CD8-positive, alpha-beta T cell (primary cell): ENCODE measurements at regions of chr2 and their contacts with region 1.

Region 1: DNA sequence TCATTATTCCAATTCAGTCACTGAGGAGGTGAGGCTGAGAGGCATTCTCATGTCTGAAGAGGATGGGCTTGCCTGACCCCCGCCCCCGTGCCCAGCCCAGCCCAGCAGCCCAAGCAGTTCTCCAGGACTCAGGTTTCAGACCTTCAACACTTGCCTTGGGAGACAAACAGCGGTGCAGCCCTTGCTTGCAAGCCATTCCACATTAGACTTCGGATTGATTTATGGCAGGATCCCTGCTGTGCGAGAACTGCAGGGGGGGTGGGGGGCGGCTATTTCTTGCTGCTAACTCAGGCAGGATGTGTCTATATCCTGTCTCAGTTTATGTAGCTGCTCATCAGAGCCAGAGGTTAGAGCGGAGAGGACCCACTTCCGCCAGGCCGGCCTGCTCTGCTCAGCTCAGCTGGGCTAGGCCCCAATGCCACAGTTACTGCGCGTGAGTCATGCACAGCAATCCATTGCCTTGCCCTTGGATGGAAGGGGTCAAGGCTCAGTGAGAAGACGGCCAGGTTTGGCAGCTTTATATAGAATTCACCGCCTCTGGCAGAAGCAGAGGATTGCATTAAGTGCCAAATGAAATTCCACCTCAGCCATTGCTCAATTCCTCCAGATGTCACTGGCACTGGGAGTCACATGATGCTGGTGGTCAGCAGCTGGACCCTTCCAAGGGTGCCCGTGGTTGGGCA is 1.8 kb downstream of the GYPC start:
- DNase-seq: peak; percentile 49 to 89 (median 79)
- ATAC-seq: peak; percentile 62
- H3K4me3 ChIP-seq: peak overlapping the region; percentile 80 to 96
- H3K4me3 Mint-ChIP-seq: peak overlapping the region; percentile 94
- H3K27ac ChIP-seq: peak overlapping the region; percentile 87 to 89
- H3K27ac Mint-ChIP-seq: peak overlapping the region; percentile 98
- H3K4me1 ChIP-seq: peaks cover 59% of the 10 kb centered on the region
- H3K4me1 Mint-ChIP-seq: peaks cover 75% of the 10 kb centered on the region
- H3K27me3 ChIP-seq: no peaks in the 10 kb centered on the region
- H3K27me3 Mint-ChIP-seq: no peaks in the 10 kb centered on the region
- CTCF ChIP-seq: no peak

Region 2: DNA sequence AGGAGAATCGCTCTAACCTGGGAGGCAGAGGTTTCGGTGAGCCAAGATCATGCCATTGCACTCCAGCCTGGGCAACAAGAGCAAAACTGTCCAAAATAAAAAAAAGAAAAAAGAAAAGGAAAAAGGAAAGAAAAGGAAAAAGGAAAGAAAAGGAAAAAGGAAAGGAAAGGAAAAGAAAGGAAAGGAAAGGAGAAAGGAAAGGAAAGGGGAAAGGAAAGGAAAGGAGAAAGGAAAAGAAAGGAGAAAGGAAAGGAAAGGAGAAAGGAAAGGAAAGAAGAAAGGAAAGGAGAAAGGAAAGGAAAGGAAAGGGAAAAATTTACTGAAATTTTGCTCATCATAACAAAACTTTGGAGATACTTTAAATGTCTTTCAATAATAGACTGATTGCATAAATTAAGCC is 393.2 kb before region 1 on chr2:
- CTCF ChIA-PET with region 1: no interaction called
- POLR2A ChIA-PET with region 1: no interaction called
- intact Hi-C with region 1: no loop called
- DNase-seq: no peak
- ATAC-seq: no peak
- H3K4me3 ChIP-seq: no peak overlapping the region
- H3K4me3 Mint-ChIP-seq: no peak overlapping the region
- H3K27ac ChIP-seq: no peak overlapping the region
- H3K27ac Mint-ChIP-seq: no peak overlapping the region
- H3K4me1 ChIP-seq: no peaks in the 10 kb centered on the region
- H3K4me1 Mint-ChIP-seq: no peaks in the 10 kb centered on the region
- H3K27me3 ChIP-seq: peaks cover 0 to 2% of the 10 kb centered on the region in 2 experiments
- H3K27me3 Mint-ChIP-seq: peaks cover 18% of the 10 kb centered on the region
- CTCF ChIP-seq: no peak

Region 3: GRCh38 chr2:126513033-126513432 is 144.7 kb before region 1 on chr2:
- CTCF ChIA-PET with region 1: no interaction called
- POLR2A ChIA-PET with region 1: no interaction called
- intact Hi-C with region 1: no loop called
- DNase-seq: no peak
- ATAC-seq: no peak
- H3K4me3 ChIP-seq: no peak overlapping the region
- H3K4me3 Mint-ChIP-seq: no peak overlapping the region
- H3K27ac ChIP-seq: no peak overlapping the region
- H3K27ac Mint-ChIP-seq: no peak overlapping the region
- H3K4me1 ChIP-seq: no peaks in the 10 kb centered on the region
- H3K4me1 Mint-ChIP-seq: no peaks in the 10 kb centered on the region
- H3K27me3 ChIP-seq: no peaks in the 10 kb centered on the region
- H3K27me3 Mint-ChIP-seq: no peaks in the 10 kb centered on the region
- CTCF ChIP-seq: no peak

Region 4: GRCh38 chr2:126634273-126634861 is 23.4 kb before region 1 on chr2:
- CTCF ChIA-PET with region 1: interaction called, 4 read pairs
- POLR2A ChIA-PET with region 1: no interaction called
- intact Hi-C with region 1: loop called in 1 of 2 experiments (anchors 2 kb)
- DNase-seq: peak in 7 of 9 experiments; percentile 14 to 67 (median 41)
- ATAC-seq: peak; percentile 48
- H3K4me3 ChIP-seq: no peak overlapping the region
- H3K4me3 Mint-ChIP-seq: no peak overlapping the region
- H3K27ac ChIP-seq: no peak overlapping the region
- H3K27ac Mint-ChIP-seq: no peak overlapping the region
- H3K4me1 ChIP-seq: no peaks in the 10 kb centered on the region
- H3K4me1 Mint-ChIP-seq: peaks cover 5% of the 10 kb centered on the region
- H3K27me3 ChIP-seq: no peaks in the 10 kb centered on the region
- H3K27me3 Mint-ChIP-seq: no peaks in the 10 kb centered on the region
- CTCF ChIP-seq: peak; percentile 51

Region 5: GRCh38 chr2:126714191-126714965 is 56.6 kb after region 1 on chr2:
- CTCF ChIA-PET with region 1: no interaction called
- POLR2A ChIA-PET with region 1: no interaction called
- intact Hi-C with region 1: loop called in 1 of 2 experiments (anchors 5 kb)
- DNase-seq: peak in 1 of 9 experiments; percentile 7
- ATAC-seq: no peak
- H3K4me3 ChIP-seq: no peak overlapping the region
- H3K4me3 Mint-ChIP-seq: no peak overlapping the region
- H3K27ac ChIP-seq: no peak overlapping the region
- H3K27ac Mint-ChIP-seq: no peak overlapping the region
- H3K4me1 ChIP-seq: no peaks in the 10 kb centered on the region
- H3K4me1 Mint-ChIP-seq: peaks cover 6% of the 10 kb centered on the region
- H3K27me3 ChIP-seq: no peaks in the 10 kb centered on the region
- H3K27me3 Mint-ChIP-seq: no peaks in the 10 kb centered on the region
- CTCF ChIP-seq: no peak

Region 6: GRCh38 chr2:126761981-126762878 is 104.5 kb after region 1 on chr2:
- CTCF ChIA-PET with region 1: interaction called, 5 read pairs
- POLR2A ChIA-PET with region 1: interaction called, 7 read pairs
- intact Hi-C with region 1: loop called (anchors 2 to 5 kb)
- DNase-seq: peak; percentile 22 to 81 (median 62)
- ATAC-seq: peak; percentile 93
- H3K4me3 ChIP-seq: peak overlapping the region; percentile 9 to 36
- H3K4me3 Mint-ChIP-seq: peak overlapping the region; percentile 76
- H3K27ac ChIP-seq: peak overlapping the region; percentile 49 to 64
- H3K27ac Mint-ChIP-seq: peak overlapping the region; percentile 97
- H3K4me1 ChIP-seq: peaks cover 53% of the 10 kb centered on the region
- H3K4me1 Mint-ChIP-seq: peaks cover 83% of the 10 kb centered on the region
- H3K27me3 ChIP-seq: no peaks in the 10 kb centered on the region
- H3K27me3 Mint-ChIP-seq: no peaks in the 10 kb centered on the region
- CTCF ChIP-seq: no peak

Region 7: GRCh38 chr2:127081826-127082633 is 424.3 kb after region 1 on chr2:
- CTCF ChIA-PET with region 1: no interaction called
- POLR2A ChIA-PET with region 1: no interaction called
- intact Hi-C with region 1: loop called (anchors 2 to 10 kb)
- DNase-seq: peak; percentile 67 to 94 (median 82)
- ATAC-seq: peak; percentile 66
- H3K4me3 ChIP-seq: peak overlapping the region; percentile 84 to 94
- H3K4me3 Mint-ChIP-seq: peak overlapping the region; percentile 90
- H3K27ac ChIP-seq: peak overlapping the region; percentile 94 to 96
- H3K27ac Mint-ChIP-seq: peak overlapping the region; percentile 99
- H3K4me1 ChIP-seq: peaks cover 94% of the 10 kb centered on the region
- H3K4me1 Mint-ChIP-seq: peaks cover 85% of the 10 kb centered on the region
- H3K27me3 ChIP-seq: no peaks in the 10 kb centered on the region
- H3K27me3 Mint-ChIP-seq: no peaks in the 10 kb centered on the region
- CTCF ChIP-seq: no peak

Region 8: DNA sequence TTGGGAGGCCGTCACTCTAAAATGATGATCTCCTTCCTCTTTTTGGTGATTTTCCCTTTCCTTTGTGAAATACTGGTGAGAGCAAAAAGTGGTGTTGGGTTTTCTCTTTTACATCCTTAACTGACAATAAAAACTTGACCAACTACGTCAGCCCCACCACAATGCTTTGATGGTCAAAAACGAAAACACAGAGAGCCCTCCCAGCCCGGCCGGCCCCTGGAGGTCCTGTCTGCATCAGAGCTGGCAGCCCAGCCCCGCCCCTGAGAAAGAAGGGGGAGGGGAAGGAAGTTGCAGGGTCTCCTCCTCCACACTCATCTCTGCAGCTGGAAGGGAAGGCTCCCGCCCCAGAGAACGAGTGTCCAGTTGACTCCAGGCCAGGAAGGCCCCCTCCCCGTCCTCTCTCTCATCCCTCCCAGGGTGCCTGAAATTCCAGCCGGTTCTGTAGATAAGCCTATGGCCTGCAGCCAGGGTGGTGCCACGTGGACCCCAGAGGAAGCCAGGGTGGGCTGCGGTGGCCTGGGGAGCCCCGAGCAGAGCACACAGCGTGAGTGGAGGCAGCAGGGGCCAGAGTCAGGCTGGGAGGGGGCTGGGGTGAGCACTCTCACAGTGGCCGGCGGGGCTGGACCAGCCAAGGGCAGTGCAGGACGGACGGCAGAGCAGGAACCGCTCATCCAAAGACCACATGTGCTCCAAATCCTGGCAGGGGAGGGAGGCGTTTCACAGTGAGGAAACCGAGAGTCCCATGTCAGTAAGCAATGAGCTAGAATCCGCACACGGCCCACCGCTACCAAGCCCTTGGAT is 429.4 kb after region 1 on chr2:
- CTCF ChIA-PET with region 1: no interaction called
- POLR2A ChIA-PET with region 1: no interaction called
- intact Hi-C with region 1: loop called in 1 of 2 experiments (anchors 10 kb)
- DNase-seq: no peak
- ATAC-seq: no peak
- H3K4me3 ChIP-seq: no peak overlapping the region
- H3K4me3 Mint-ChIP-seq: no peak overlapping the region
- H3K27ac ChIP-seq: peak overlapping the region in 1 of 2 experiments; percentile 51
- H3K27ac Mint-ChIP-seq: peak overlapping the region; percentile 84
- H3K4me1 ChIP-seq: peaks cover 53% of the 10 kb centered on the region
- H3K4me1 Mint-ChIP-seq: peaks cover 49% of the 10 kb centered on the region
- H3K27me3 ChIP-seq: no peaks in the 10 kb centered on the region
- H3K27me3 Mint-ChIP-seq: no peaks in the 10 kb centered on the region
- CTCF ChIP-seq: no peak

Region 9: GRCh38 chr2:128321784-128322714 is 1664.3 kb after region 1 on chr2:
- CTCF ChIA-PET with region 1: no interaction called
- POLR2A ChIA-PET with region 1: no interaction called
- intact Hi-C with region 1: loop called in 1 of 2 experiments (anchors 5 kb)
- DNase-seq: peak; percentile 66 to 89 (median 80)
- ATAC-seq: peak; percentile 68
- H3K4me3 ChIP-seq: peak overlapping the region; percentile 48 to 76
- H3K4me3 Mint-ChIP-seq: peak overlapping the region; percentile 74
- H3K27ac ChIP-seq: peak overlapping the region in 1 of 2 experiments; percentile 35
- H3K27ac Mint-ChIP-seq: no peak overlapping the region
- H3K4me1 ChIP-seq: peaks cover 15% of the 10 kb centered on the region
- H3K4me1 Mint-ChIP-seq: peaks cover 14% of the 10 kb centered on the region
- H3K27me3 ChIP-seq: peaks cover 0 to 3% of the 10 kb centered on the region in 2 experiments
- H3K27me3 Mint-ChIP-seq: no peaks in the 10 kb centered on the region
- CTCF ChIP-seq: peak; percentile 94